Activated CD8-positive, alpha-beta T cell treated with anti-CD3 and anti-CD28 coated beads for 36 hours (primary cell): ENCODE measurements at regions of chr9 and their contacts with region 1.

Region 1: GRCh38 chr9:130701056-130702022 is 7.8 kb downstream of the EXOSC2 start:
- DNase-seq: peak; percentile 83
- ATAC-seq: peak; percentile 94
- H3K4me3 Mint-ChIP-seq: no peak overlapping the region
- H3K27ac Mint-ChIP-seq: no peak overlapping the region
- H3K4me1 Mint-ChIP-seq: peaks cover 31% of the 10 kb centered on the region
- H3K27me3 Mint-ChIP-seq: no peaks in the 10 kb centered on the region
- CTCF ChIP-seq: peak; percentile 95

Region 2: DNA sequence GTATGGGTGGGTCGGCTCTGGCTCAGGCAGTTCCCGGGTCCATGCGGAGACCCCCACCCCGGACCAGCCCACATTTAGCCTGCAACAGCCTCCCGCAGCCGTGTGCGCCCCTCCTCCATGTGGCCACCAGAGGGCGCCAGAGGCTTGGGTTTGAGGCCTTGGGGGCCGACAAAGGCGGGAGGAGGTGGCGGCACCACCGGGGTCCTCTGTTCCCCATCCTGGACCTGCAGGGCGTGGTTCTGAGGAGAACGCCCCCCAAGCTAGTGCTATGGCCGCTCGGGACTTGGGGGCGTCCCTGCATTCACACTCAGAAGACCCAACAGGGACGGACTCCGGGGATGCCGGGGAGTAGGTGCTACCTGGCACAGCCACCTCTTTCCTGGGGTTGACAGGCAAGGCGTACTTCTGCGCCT is 240.1 kb before region 1 on chr9:
- CTCF ChIA-PET with region 1: interaction called, 10 read pairs
- POLR2A ChIA-PET with region 1: no interaction called
- intact Hi-C with region 1: no loop called
- DNase-seq: peak; percentile 79
- ATAC-seq: peak; percentile 85
- H3K4me3 Mint-ChIP-seq: no peak overlapping the region
- H3K27ac Mint-ChIP-seq: no peak overlapping the region
- H3K4me1 Mint-ChIP-seq: no peaks in the 10 kb centered on the region
- H3K27me3 Mint-ChIP-seq: peaks cover 15% of the 10 kb centered on the region
- CTCF ChIP-seq: peak; percentile 95

Region 3: DNA sequence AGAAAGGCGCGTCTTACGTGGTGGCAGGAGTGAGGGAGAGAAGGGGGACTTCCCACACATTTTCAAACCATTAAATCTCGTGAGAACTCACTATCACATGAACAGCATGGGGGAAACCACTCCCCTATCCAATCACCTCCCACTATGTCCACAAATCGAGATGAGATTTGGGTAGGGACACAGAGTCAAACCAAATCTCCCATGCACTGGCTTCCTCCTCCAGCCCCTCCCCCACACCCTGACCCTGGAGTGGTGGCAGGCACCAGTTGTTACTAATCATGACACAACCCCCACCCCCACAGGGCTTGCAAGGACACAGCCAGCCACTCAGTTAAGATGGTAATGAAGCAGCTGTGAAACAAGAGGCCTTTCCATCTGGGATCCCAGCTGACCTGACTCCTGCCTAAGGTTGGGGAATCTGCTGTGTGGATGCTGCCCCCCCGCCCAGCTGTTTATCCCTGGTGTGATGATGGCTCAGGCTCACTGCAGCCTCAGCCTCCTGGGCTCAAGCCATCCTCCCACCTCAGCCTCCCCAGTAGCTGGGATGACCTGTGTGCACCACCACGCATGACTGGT is 179.0 kb before region 1 on chr9:
- CTCF ChIA-PET with region 1: no interaction called
- POLR2A ChIA-PET with region 1: no interaction called
- intact Hi-C with region 1: no loop called
- DNase-seq: peak; percentile 51
- ATAC-seq: peak; percentile 56
- H3K4me3 Mint-ChIP-seq: no peak overlapping the region
- H3K27ac Mint-ChIP-seq: no peak overlapping the region
- H3K4me1 Mint-ChIP-seq: peaks cover 4% of the 10 kb centered on the region
- H3K27me3 Mint-ChIP-seq: peaks cover 5% of the 10 kb centered on the region
- CTCF ChIP-seq: no peak

Region 4: GRCh38 chr9:130578865-130579737 is 122.2 kb before region 1 on chr9 and contains the start of gene FUBP3:
- CTCF ChIA-PET with region 1: no interaction called
- POLR2A ChIA-PET with region 1: no interaction called
- intact Hi-C with region 1: no loop called
- DNase-seq: peak; percentile 95
- ATAC-seq: peak; percentile 89
- H3K4me3 Mint-ChIP-seq: peak within 1 kb of the TSS; percentile 91
- H3K27ac Mint-ChIP-seq: peak within 1 kb of the TSS; percentile 91
- H3K4me1 Mint-ChIP-seq: peaks cover 34% of the 10 kb centered on the region
- H3K27me3 Mint-ChIP-seq: no peaks in the 10 kb centered on the region
- CTCF ChIP-seq: no peak
- total RNA-seq, gene FUBP3: 32.9 to 42.9 TPM

Region 5: DNA sequence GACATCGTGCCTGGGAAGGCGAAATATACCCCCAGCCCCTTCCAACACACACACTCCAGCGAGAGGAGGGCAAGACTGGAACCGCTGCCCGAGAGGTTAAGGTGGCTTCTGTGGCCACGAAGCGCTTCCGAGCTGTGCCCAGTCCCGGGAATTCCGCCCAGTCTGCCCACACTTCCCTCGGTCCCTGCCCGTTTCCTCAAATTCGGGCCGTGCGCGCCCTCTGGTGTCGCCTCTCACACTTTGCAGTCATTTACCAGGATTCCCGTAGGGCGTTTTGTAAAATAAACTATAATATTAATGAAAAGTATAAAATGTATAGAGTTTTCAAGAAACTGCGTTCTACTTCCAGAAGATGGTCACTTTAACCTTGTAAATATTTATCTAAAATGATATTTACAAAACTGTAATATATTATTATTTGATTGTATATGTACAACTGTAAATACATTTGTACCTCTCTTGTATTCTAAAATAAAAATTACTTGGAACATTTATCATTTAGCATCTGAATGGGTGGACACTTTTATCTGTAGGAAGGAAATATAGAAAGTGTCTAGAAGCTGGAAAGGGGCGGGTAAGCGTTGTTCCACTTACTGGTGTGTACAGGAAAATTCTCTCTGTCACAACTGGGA is 18.7 kb before region 1 on chr9:
- CTCF ChIA-PET with region 1: interaction called, 36 read pairs
- POLR2A ChIA-PET with region 1: interaction called, 3 read pairs
- intact Hi-C with region 1: no loop called
- DNase-seq: peak; percentile 70
- ATAC-seq: peak; percentile 29
- H3K4me3 Mint-ChIP-seq: peak overlapping the region; percentile 83
- H3K27ac Mint-ChIP-seq: peak overlapping the region; percentile 79
- H3K4me1 Mint-ChIP-seq: peaks cover 7% of the 10 kb centered on the region
- H3K27me3 Mint-ChIP-seq: peaks cover 12% of the 10 kb centered on the region
- CTCF ChIP-seq: peak; percentile 95

Region 6: DNA sequence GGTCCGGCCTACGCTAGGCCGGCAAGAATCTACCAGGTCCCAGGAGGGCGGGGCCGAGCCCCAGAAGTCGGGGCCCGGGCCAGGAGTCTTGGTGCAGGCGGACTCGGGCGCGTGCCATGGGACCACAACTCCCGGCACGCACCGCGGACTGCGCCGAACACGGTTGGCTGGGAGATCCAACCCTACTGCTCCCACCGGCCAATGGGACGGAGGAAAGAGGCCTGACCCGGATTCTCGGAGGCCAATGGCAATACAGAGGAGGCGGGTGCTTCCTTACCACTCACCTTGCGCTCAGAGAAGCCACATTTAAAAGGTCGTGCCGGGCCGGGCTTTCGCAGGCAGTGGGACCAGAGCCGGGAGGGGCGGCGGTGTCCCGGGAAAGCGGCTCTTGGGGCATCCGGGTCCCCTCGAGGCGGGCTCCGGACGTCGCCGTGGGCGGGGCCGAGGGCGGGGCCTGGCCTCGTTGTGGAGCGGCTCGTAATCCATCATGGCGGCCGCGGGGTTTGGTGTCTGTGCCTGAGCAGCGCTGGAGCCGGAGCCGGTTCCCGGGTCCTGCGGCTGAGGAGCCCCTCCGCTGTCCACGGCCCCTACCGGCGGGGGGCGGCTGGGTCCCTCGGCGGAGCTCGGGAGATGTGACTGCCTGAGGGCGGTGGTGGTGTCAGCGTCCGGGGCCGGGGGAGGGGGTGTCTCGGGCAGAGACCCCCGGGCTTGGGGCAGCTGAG is 11.4 kb after region 1 on chr9:
- CTCF ChIA-PET with region 1: interaction called, 37 read pairs
- POLR2A ChIA-PET with region 1: interaction called, 54 read pairs
- intact Hi-C with region 1: no loop called
- DNase-seq: peak; percentile 98
- ATAC-seq: peak; percentile 98
- H3K4me3 Mint-ChIP-seq: peak overlapping the region; percentile 93
- H3K27ac Mint-ChIP-seq: peak overlapping the region; percentile 92
- H3K4me1 Mint-ChIP-seq: peaks cover 30% of the 10 kb centered on the region
- H3K27me3 Mint-ChIP-seq: no peaks in the 10 kb centered on the region
- CTCF ChIP-seq: no peak

Region 7: DNA sequence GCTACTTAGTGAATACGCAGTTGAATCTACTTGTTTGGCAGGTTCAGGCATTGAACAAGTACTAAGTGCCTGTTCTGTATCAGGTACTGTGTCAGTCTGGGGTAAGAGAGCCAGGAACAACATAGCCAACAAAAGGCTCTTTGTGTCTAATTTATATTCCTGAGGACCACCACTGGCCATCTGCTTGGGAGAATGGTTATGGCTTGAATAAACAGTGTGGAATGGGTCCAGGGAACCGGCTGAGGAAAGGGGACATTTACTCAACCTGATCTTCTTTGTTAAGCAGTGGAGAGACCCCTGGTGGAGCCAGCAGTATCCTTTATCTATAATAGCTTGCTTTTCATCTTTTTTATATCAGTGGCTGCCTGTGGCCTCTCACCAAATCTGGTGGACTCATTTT is 30.8 kb after region 1 on chr9:
- CTCF ChIA-PET with region 1: interaction called, 16 read pairs
- POLR2A ChIA-PET with region 1: interaction called, 3 read pairs
- intact Hi-C with region 1: no loop called
- DNase-seq: peak; percentile 20
- ATAC-seq: no peak
- H3K4me3 Mint-ChIP-seq: no peak overlapping the region
- H3K27ac Mint-ChIP-seq: no peak overlapping the region
- H3K4me1 Mint-ChIP-seq: peaks cover 17% of the 10 kb centered on the region
- H3K27me3 Mint-ChIP-seq: no peaks in the 10 kb centered on the region
- CTCF ChIP-seq: no peak

Region 8: DNA sequence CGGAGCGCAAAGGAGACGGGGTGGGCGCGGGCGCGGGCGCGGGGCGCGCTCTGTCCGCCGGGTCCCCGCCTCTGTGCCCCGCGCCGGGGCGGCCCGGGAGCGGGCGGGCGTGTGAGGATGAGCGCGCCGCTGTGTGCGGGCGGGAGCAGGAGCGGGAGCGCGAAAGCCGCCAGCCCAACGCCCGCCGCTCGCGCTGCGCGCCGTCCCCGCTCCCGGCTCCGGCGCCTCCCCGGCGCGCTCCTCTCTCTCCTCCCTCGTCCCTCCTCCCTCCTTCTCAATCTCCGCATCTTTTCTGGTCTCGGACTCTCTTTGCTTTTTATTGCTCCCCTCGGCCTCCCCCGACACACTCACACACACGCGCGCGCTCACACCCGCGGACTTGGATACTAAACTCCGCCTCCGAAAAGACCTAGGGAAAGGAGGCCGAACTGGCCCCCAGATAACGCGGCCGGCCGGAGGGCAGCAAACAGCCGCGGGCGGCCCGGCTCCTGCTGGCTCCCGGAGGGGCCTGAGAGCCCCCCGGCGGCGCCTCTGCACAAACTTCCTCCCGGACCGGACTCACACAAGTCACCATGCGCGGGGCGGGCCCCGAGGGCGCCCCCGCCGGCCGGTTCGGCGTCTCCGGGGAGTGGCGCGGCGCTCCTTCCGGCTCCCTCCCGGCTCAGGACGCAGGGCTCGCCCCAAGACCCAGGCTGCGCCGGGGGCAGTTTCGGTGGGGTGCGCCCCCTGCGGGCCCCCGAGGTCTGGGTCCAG is 237.5 kb after region 1 on chr9 and contains the start of gene FIBCD1:
- CTCF ChIA-PET with region 1: interaction called, 5 read pairs
- POLR2A ChIA-PET with region 1: no interaction called
- intact Hi-C with region 1: loop called (anchors 10 kb)
- DNase-seq: peak; percentile 40
- ATAC-seq: peak; percentile 41
- H3K4me3 Mint-ChIP-seq: peak within 1 kb of the TSS; percentile 35
- H3K27ac Mint-ChIP-seq: no peak within 1 kb of the TSS
- H3K4me1 Mint-ChIP-seq: peaks cover 7% of the 10 kb centered on the region
- H3K27me3 Mint-ChIP-seq: peaks cover 45% of the 10 kb centered on the region
- CTCF ChIP-seq: peak; percentile 11
- total RNA-seq, gene FIBCD1: not detected

Region 9: GRCh38 chr9:131046581-131047202 is 345.4 kb after region 1 on chr9:
- CTCF ChIA-PET with region 1: interaction called, 11 read pairs
- POLR2A ChIA-PET with region 1: no interaction called
- intact Hi-C with region 1: no loop called
- DNase-seq: peak; percentile 80
- ATAC-seq: peak; percentile 94
- H3K4me3 Mint-ChIP-seq: no peak overlapping the region
- H3K27ac Mint-ChIP-seq: no peak overlapping the region
- H3K4me1 Mint-ChIP-seq: no peaks in the 10 kb centered on the region
- H3K27me3 Mint-ChIP-seq: no peaks in the 10 kb centered on the region
- CTCF ChIP-seq: peak; percentile 98